IMR-90 (cell line): ENCODE measurements at regions of chr20 and their contacts with region 1.

Region 1: GRCh38 chr20:61120595-61121515 is 131.2 kb upstream of the CDH4 start:
- DNase-seq: peak; percentile 69
- ATAC-seq: peak; percentile 63
- H3K4me3 ChIP-seq: no peak overlapping the region
- H3K27ac ChIP-seq: no peak overlapping the region
- H3K4me1 ChIP-seq: no peaks in the 10 kb centered on the region
- H3K27me3 ChIP-seq: no peaks in the 10 kb centered on the region
- CTCF ChIP-seq: peak; percentile 47
- POLR2A ChIP-seq: no peak
- RAD21 ChIP-seq: peak; percentile 45

Region 2: GRCh38 chr20:59948828-59949720 is 1171.8 kb before region 1 on chr20:
- CTCF ChIA-PET with region 1: no interaction called
- POLR2A ChIA-PET with region 1: no interaction called
- dilution Hi-C with region 1: no loop called
- in situ Hi-C with region 1: no loop called
- intact Hi-C with region 1: loop called (anchors 5 kb)
- DNase-seq: peak; percentile 67
- ATAC-seq: peak; percentile 67
- H3K4me3 ChIP-seq: no peak overlapping the region
- H3K27ac ChIP-seq: no peak overlapping the region
- H3K4me1 ChIP-seq: peaks cover 2% of the 10 kb centered on the region
- H3K27me3 ChIP-seq: no peaks in the 10 kb centered on the region
- CTCF ChIP-seq: peak; percentile 77
- POLR2A ChIP-seq: no peak
- RAD21 ChIP-seq: peak; percentile 72

Region 3: GRCh38 chr20:60352066-60352465 is 768.8 kb before region 1 on chr20:
- CTCF ChIA-PET with region 1: no interaction called
- POLR2A ChIA-PET with region 1: no interaction called
- dilution Hi-C with region 1: no loop called
- in situ Hi-C with region 1: no loop called
- intact Hi-C with region 1: no loop called
- DNase-seq: no peak
- ATAC-seq: no peak
- H3K4me3 ChIP-seq: no peak overlapping the region
- H3K27ac ChIP-seq: no peak overlapping the region
- H3K4me1 ChIP-seq: no peaks in the 10 kb centered on the region
- H3K27me3 ChIP-seq: no peaks in the 10 kb centered on the region
- CTCF ChIP-seq: no peak
- POLR2A ChIP-seq: no peak
- RAD21 ChIP-seq: no peak

Region 4: DNA sequence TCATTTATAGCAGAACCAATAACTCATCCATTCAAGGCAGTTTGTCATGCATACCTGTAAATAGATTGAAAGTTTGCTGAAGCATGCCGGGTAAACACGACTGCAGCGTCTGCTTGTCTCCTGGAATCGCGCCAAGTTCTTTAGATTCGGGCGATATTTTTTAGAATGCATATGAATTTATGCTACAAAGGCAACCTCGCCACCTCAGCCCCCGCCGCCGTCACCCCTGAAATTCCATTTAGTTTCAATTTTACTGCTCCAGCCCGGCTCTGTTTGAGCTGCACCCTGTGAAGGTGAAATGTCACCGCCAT is 113.9 kb after region 1 on chr20:
- CTCF ChIA-PET with region 1: no interaction called
- POLR2A ChIA-PET with region 1: no interaction called
- dilution Hi-C with region 1: no loop called
- in situ Hi-C with region 1: no loop called
- intact Hi-C with region 1: loop called (anchors 2 kb)
- DNase-seq: no peak
- ATAC-seq: no peak
- H3K4me3 ChIP-seq: no peak overlapping the region
- H3K27ac ChIP-seq: no peak overlapping the region
- H3K4me1 ChIP-seq: no peaks in the 10 kb centered on the region
- H3K27me3 ChIP-seq: peaks cover 10% of the 10 kb centered on the region
- CTCF ChIP-seq: no peak
- POLR2A ChIP-seq: no peak
- RAD21 ChIP-seq: no peak